ENCODE measurements at regions of chr2 and their contacts with region 1.

Region 1: DNA sequence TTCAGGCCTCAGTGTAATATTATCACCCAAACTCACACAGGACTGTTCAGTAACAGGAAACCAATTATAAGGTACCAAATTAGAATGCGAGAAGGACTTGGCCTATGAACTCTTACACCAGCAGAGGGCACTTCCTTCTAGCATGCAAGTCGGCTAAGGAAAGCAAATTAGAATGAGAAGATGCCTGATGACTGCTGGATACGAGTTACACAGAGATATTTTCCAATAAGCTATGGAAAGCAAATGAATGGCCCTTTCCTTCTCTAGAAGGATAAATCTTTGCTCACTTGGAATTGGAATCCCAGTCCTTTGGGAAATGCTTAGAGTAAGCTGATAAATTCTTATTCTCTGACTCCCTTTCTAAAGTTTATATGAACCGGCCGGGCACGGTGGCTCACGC is 109.8 kb downstream of the AP1S3 start:
- DNase-seq: peak; percentile 90
- H3K4me3 ChIP-seq: no peak overlapping the region
- H3K27ac ChIP-seq: peak overlapping the region; percentile 56
- H3K4me1 ChIP-seq: peaks cover 64% of the 10 kb centered on the region
- H3K27me3 ChIP-seq: no peaks in the 10 kb centered on the region
- CTCF ChIP-seq: peak; percentile 81

Region 2: GRCh38 chr2:223041527-223042109 is 685.9 kb before region 1 on chr2:
- CTCF ChIA-PET with region 1: no interaction called
- POLR2A ChIA-PET with region 1: no interaction called
- intact Hi-C with region 1: loop called (anchors 10 kb)
- DNase-seq: peak; percentile 98
- H3K4me3 ChIP-seq: no peak overlapping the region
- H3K27ac ChIP-seq: peak overlapping the region; percentile 95
- H3K4me1 ChIP-seq: peaks cover 65% of the 10 kb centered on the region
- H3K27me3 ChIP-seq: no peaks in the 10 kb centered on the region
- CTCF ChIP-seq: no peak

Region 3: GRCh38 chr2:223414646-223415045 is 312.9 kb before region 1 on chr2:
- CTCF ChIA-PET with region 1: no interaction called
- POLR2A ChIA-PET with region 1: no interaction called
- intact Hi-C with region 1: no loop called
- DNase-seq: no peak
- H3K4me3 ChIP-seq: no peak overlapping the region
- H3K27ac ChIP-seq: no peak overlapping the region
- H3K4me1 ChIP-seq: peaks cover 10% of the 10 kb centered on the region
- H3K27me3 ChIP-seq: no peaks in the 10 kb centered on the region
- CTCF ChIP-seq: no peak

Region 4: GRCh38 chr2:223744573-223744972 is 17.0 kb after region 1 on chr2:
- CTCF ChIA-PET with region 1: no interaction called
- POLR2A ChIA-PET with region 1: interaction called, 19 read pairs
- intact Hi-C with region 1: no loop called
- DNase-seq: no peak
- H3K4me3 ChIP-seq: no peak overlapping the region
- H3K27ac ChIP-seq: peak overlapping the region; percentile 96
- H3K4me1 ChIP-seq: peaks cover 48% of the 10 kb centered on the region
- H3K27me3 ChIP-seq: no peaks in the 10 kb centered on the region
- CTCF ChIP-seq: no peak

Region 5: GRCh38 chr2:224764565-224765236 is 1037.1 kb after region 1 on chr2:
- CTCF ChIA-PET with region 1: no interaction called
- POLR2A ChIA-PET with region 1: no interaction called
- intact Hi-C with region 1: no loop called
- DNase-seq: no peak
- H3K4me3 ChIP-seq: no peak overlapping the region
- H3K27ac ChIP-seq: no peak overlapping the region
- H3K4me1 ChIP-seq: no peaks in the 10 kb centered on the region
- H3K27me3 ChIP-seq: no peaks in the 10 kb centered on the region
- CTCF ChIP-seq: no peak